ENCODE measurements at regions of chr3 and their contacts with region 1.

Region 1: DNA sequence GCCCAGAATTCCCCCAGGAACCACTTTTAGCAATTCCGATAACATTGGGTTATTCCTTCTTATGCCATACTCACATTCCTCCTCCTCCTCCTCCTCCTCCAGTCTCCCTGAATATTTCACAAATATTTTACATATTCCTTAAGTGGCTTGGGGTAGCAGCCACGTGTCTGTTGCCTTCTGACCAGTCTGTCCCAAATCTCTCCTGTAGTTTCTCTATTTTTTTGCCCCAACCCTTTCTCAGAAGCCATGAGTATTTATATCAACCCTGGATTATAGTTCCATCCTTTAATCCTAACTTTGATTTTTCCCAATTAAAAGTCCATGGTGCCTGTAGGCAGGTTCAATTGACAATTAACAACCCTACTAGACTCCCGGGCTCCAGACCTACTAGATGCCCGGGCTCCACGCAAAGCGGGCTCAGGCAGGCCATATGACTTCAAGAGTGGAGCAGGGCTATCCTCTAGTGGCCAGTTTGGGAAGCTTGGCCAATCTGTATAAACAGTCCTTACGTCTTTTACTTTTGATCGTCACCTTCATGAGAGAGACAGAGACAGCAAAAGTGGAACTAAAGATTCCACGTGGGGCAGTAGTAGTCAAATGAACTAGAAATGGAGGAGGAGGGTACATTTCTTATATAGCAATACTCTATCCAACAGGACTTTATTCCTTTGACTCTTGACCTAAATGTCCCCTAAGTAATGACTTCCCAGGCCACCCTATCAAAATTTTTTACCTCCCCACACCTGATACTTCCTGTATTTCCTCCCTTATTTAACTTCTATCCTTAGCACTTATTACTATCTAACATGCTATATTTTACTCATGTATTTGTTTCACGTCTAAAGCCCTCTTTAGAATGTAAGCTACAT is 69.7 kb downstream of the USF3 start:
- DNase-seq: peak; percentile 62 to 71
- H3K4me3 ChIP-seq: no peak overlapping the region
- H3K4me3 Mint-ChIP-seq: no peak overlapping the region
- H3K27ac Mint-ChIP-seq: no peak overlapping the region
- H3K4me1 ChIP-seq: peaks cover 5% of the 10 kb centered on the region; the same call in 1 of the 2 replicates
- H3K4me1 Mint-ChIP-seq: peaks cover 9% of the 10 kb centered on the region
- H3K27me3 ChIP-seq: no peaks in the 10 kb centered on the region
- H3K27me3 Mint-ChIP-seq: peaks cover 8% of the 10 kb centered on the region
- CTCF ChIP-seq: peak; percentile 78 to 95

Region 2: DNA sequence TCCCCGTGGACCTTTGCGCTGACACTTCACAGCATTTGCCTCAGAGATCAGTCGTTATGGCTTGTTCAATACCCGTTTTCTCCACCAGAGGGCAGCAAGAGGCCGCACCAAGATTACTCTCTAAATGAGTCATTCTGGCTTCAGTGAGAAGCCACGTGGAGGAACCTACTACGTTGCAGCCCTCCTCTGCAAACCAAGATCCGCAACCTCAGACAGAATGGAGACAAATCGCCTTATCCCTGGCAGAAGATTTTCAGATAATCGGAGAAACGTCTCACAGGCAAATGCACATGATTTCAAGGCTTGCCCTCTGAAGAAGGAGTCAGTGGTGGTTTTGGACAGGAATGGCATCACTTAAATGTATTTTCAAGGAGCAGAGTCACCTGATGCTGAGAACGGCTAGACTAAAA is 575.4 kb before region 1 on chr3:
- CTCF ChIA-PET with region 1: no interaction called
- POLR2A ChIA-PET with region 1: no interaction called
- intact Hi-C with region 1: loop called (anchors 1 kb)
- DNase-seq: peak; percentile 72 to 84
- H3K4me3 ChIP-seq: no peak overlapping the region
- H3K4me3 Mint-ChIP-seq: no peak overlapping the region
- H3K27ac Mint-ChIP-seq: no peak overlapping the region
- H3K4me1 ChIP-seq: no peaks in the 10 kb centered on the region
- H3K4me1 Mint-ChIP-seq: no peaks in the 10 kb centered on the region
- H3K27me3 ChIP-seq: no peaks in the 10 kb centered on the region
- H3K27me3 Mint-ChIP-seq: no peaks in the 10 kb centered on the region
- CTCF ChIP-seq: peak; percentile 78 to 91

Region 3: DNA sequence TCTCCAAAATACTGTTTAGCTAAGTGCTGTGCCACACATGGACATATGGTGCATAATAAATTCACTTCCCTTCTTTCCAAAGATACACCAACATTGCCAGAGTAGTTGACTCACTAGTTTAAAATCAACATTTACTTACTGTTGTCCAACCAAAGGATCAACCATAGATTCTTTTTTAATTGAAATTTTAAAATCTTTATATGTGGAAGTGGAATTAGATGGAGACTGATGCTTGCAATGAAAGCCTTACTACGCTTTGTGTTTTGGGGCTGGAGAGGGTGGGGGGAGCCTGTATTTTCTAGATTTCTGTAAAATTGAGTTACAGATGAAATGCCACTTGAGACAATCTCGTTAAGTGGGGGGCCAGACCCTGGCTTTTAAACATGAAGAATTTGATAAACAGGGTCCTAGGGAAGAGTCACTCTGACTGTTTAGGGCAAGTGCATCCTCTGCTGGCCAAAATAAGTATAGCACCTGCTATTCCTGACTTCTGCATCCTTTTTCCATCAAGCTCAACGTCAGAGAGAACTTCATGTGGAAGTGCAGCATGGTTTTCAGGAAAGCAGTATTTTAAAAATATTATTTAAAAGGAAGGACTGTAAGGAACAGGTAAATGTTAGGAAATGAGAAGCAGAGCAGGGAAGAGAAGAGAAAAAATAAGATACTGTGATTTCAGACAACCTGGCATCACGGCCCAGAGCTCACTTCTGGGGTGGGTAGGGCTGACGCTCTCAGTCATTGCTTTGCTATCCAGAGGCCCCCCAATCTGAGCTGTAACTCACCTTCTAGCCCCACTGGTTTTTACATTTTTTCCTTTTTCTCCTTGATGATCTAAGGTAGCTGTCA is 338.7 kb before region 1 on chr3:
- CTCF ChIA-PET with region 1: no interaction called
- POLR2A ChIA-PET with region 1: no interaction called
- intact Hi-C with region 1: loop called (anchors 2 kb)
- DNase-seq: peak in 1 of 2 experiments; percentile 58
- H3K4me3 ChIP-seq: no peak overlapping the region
- H3K4me3 Mint-ChIP-seq: no peak overlapping the region
- H3K27ac Mint-ChIP-seq: no peak overlapping the region
- H3K4me1 ChIP-seq: no peaks in the 10 kb centered on the region
- H3K4me1 Mint-ChIP-seq: peaks cover under 1% of the 10 kb centered on the region
- H3K27me3 ChIP-seq: no peaks in the 10 kb centered on the region; the same call in 1 of the 2 replicates
- H3K27me3 Mint-ChIP-seq: peaks cover 5% of the 10 kb centered on the region
- CTCF ChIP-seq: peak; percentile 95 to 98

Region 4: DNA sequence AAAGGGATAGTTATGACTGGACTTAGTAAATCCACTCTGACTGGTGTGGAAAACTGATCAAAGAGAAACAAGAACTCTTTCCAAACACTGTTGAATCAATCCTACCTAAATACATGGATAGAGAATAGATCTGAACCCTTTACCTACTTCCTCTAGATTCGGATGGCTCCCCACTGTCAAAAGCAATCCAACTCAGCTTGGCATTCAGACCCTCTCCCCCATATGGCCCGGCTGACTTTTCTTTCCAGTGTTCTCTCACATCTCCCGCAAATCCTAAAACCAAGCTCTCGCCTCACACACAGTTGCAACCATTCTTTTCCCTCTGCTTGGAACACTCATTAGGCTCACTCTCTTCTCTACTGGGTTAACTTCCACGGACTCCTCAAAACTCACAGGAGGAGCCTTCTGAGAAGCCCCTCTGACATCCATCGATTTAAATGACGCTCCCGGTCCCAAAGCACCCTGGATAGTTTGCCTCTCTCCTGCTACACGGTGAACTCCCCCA is 112.4 kb before region 1 on chr3:
- CTCF ChIA-PET with region 1: interaction called, 10 read pairs
- POLR2A ChIA-PET with region 1: no interaction called
- intact Hi-C with region 1: loop called (anchors 1 kb)
- DNase-seq: peak in 1 of 2 experiments; percentile 6
- H3K4me3 ChIP-seq: peak overlapping the region; percentile 83
- H3K4me3 Mint-ChIP-seq: no peak overlapping the region
- H3K27ac Mint-ChIP-seq: no peak overlapping the region
- H3K4me1 ChIP-seq: no peaks in the 10 kb centered on the region
- H3K4me1 Mint-ChIP-seq: peaks cover 8% of the 10 kb centered on the region
- H3K27me3 ChIP-seq: no peaks in the 10 kb centered on the region
- H3K27me3 Mint-ChIP-seq: no peaks in the 10 kb centered on the region
- CTCF ChIP-seq: no peak

Region 5: DNA sequence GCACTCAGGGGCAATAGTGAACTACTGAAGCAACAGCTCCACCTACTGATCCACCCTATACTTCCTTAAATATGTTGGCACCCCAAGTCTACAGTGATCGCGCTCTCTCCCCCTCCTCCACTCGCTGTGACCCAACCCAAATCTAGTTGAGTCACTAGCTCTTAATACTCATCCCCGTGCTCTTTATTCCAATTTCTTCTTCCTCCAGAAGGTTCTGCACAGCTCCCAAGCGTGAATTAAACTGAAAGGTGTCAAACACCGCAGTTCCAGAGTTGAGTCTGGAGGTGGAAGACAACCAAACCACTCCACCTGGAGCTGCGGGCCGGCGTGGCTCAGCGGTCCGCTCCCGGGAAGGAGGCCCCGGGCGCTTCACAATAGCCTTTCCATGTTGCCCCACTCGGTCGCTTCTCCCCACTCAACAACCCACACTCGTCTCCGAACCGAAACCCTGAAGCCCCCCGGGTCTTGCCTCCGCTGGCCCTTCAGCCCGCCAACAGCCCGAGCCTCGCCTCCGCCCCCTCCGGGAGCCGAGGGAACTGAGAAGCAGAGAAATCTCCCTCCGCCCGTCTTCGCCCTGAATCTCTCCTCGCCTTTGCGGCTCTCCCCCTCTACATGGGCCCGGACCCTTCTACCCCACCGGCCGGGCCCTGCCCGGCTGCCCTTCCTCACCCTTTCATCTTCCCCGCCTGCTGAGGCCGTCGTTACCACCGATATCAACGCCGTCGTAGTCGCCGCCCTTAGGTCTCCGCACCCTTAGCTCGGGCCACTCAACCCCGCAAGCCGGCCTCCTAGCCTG is 118.7 kb after region 1 on chr3:
- CTCF ChIA-PET with region 1: interaction called, 3 read pairs
- POLR2A ChIA-PET with region 1: no interaction called
- intact Hi-C with region 1: loop called (anchors 2 kb)
- DNase-seq: peak; percentile 75 to 79
- H3K4me3 ChIP-seq: peak overlapping the region; percentile 78
- H3K4me3 Mint-ChIP-seq: peak overlapping the region; percentile 96
- H3K27ac Mint-ChIP-seq: peak overlapping the region; percentile 100
- H3K4me1 ChIP-seq: 0 out of 2 replicates have a peak, but pooled peaks cover 3% of the 10 kb centered on the region
- H3K4me1 Mint-ChIP-seq: peaks cover 16% of the 10 kb centered on the region
- H3K27me3 ChIP-seq: no peaks in the 10 kb centered on the region
- H3K27me3 Mint-ChIP-seq: no peaks in the 10 kb centered on the region
- CTCF ChIP-seq: peak; percentile 42 to 68